Endothelial cell of umbilical vein (primary cell): ENCODE measurements at regions of chr16 and their contacts with region 1.

Region 1: GRCh38 chr16:67447508-67448076 is 16.7 kb downstream of the HSD11B2 start:
- DNase-seq: peak; percentile 41
- H3K4me3 ChIP-seq: no peak overlapping the region
- H3K27ac ChIP-seq: no peak overlapping the region
- H3K4me1 ChIP-seq: no peaks in the 10 kb centered on the region
- H3K27me3 ChIP-seq: no peaks in the 10 kb centered on the region
- CTCF ChIP-seq: peak; percentile 63 to 66
- POLR2A ChIP-seq: no peak

Region 2: GRCh38 chr16:67372664-67373063 is 74.9 kb before region 1 on chr16:
- CTCF ChIA-PET with region 1: interaction called, 12 read pairs
- POLR2A ChIA-PET with region 1: no interaction called
- dilution Hi-C with region 1: no loop called
- intact Hi-C with region 1: loop called (anchors 5 kb)
- DNase-seq: peak; percentile 40
- H3K4me3 ChIP-seq: no peak overlapping the region
- H3K27ac ChIP-seq: no peak overlapping the region
- H3K4me1 ChIP-seq: no peaks in the 10 kb centered on the region
- H3K27me3 ChIP-seq: peaks cover 3 to 17% of the 10 kb centered on the region in 2 experiments
- CTCF ChIP-seq: peak in 1 of 2 donors; percentile 39
- POLR2A ChIP-seq: no peak

Region 3: DNA sequence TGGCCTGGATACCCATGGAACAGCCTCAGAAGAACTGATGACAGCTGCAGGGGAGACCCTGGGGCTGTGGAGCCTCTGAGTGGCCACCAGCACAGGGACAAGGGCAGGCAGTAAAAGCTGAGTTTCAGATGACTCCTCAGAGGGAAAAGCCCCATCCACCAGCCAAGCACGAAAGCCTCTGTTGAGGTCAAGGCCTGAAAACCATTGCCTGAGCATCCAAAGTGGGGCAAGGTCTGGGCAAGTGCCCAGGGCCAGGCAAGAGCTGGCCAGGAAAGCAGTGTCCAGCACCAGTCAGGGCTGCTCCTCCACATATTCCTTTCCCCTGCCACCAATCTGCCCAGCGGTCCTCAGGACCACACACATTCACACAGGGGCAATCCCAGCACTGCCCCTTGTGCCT is 17.0 kb after region 1 on chr16:
- CTCF ChIA-PET with region 1: interaction called, 16 read pairs
- POLR2A ChIA-PET with region 1: no interaction called
- dilution Hi-C with region 1: no loop called
- intact Hi-C with region 1: no loop called
- DNase-seq: no peak
- H3K4me3 ChIP-seq: no peak overlapping the region
- H3K27ac ChIP-seq: no peak overlapping the region
- H3K4me1 ChIP-seq: peaks cover 9% of the 10 kb centered on the region
- H3K27me3 ChIP-seq: no peaks in the 10 kb centered on the region
- CTCF ChIP-seq: no peak
- POLR2A ChIP-seq: no peak